ENCODE measurements at regions of chr19 and their contacts with region 1.

Region 1: DNA sequence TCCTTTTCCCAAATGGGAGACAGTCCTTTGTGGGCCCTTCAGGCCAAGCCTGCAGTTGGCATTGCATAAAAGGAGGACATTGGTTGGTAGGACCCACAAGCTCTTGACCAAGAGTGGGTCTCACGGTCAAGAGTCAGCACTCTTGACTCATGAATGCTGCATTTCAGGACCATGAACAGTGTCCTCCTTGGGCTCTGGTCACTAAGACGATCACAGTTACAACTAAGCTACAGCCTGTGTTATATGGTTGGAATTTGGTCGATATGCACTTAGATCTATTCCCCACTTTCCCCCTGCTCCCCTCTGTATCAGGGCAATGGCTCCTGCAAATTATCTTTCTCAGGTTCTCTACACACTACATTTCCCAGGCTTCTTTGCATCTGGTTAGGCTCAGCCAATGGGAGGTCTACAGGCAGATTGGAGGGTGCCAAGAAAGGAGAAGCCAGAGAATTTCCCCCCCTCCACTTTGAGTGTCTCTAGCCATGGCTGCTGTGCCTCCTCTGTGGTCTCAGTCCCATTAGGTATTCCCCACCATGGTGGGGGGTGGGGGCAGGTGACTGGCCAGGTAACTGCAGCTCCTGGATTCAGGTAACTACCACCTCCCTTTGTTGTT is 3.1 kb upstream of the OLFM2 start:
- DNase-seq: no peak
- H3K4me3 ChIP-seq: no peak overlapping the region
- H3K27ac ChIP-seq: no peak overlapping the region
- H3K4me1 ChIP-seq: no peaks in the 10 kb centered on the region
- H3K27me3 ChIP-seq: peaks cover 17 to 18% of the 10 kb centered on the region in 2 experiments
- CTCF ChIP-seq: no peak
- POLR2A ChIP-seq: no peak

Region 2: DNA sequence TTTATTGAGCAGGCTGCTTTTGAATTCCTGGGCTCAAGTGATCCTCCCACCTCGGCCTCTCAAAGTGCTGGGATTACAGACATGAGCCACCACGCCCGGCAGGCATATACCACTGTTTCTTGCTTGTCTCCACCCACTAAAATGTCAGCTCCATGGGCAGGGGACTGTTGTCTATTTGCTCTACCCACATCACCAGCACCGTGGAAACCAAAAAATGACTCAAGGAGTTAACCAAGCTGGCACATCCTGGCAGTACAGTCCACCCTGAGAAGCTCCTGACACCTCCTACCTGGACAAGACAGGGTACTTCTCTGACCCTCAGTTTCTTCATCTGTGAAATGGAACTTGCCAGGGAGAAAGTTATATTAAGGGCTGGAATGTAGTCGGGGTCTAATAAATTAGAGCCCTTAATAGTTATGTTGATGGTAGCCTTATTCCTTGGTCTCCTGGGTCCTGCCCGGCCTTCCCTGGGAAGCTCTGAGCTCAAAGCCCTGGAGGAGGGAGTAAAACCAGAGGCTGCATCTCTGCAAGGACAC is 87.8 kb after region 1 on chr19:
- CTCF ChIA-PET with region 1: interaction called, 12 read pairs
- POLR2A ChIA-PET with region 1: interaction called, 3 read pairs
- dilution Hi-C with region 1: no loop called
- intact Hi-C with region 1: loop called (anchors 1 kb)
- DNase-seq: no peak
- H3K4me3 ChIP-seq: no peak overlapping the region
- H3K27ac ChIP-seq: no peak overlapping the region
- H3K4me1 ChIP-seq: peaks cover 4% of the 10 kb centered on the region
- H3K27me3 ChIP-seq: peaks cover 3 to 4% of the 10 kb centered on the region in 2 experiments
- CTCF ChIP-seq: no peak
- POLR2A ChIP-seq: no peak

Measured in endothelial cell of umbilical vein (primary cell).